ENCODE measurements at regions of chr13 and their contacts with region 1.

Region 1: GRCh38 chr13:98653463-98653985 is 76.6 kb upstream of the STK24 start:
- DNase-seq: peak; percentile 76 to 80
- ATAC-seq: peak; percentile 97 to 98
- H3K4me3 ChIP-seq: no peak overlapping the region
- H3K27ac ChIP-seq: no peak overlapping the region
- H3K4me1 ChIP-seq: 0 out of 3 replicates have a peak, but pooled peaks cover 3% of the 10 kb centered on the region
- CTCF ChIP-seq: peak; percentile 73
- EP300 ChIP-seq: no peak
- POLR2A ChIP-seq: no peak
- RAD21 ChIP-seq: peak; percentile 76 to 79

Region 2: DNA sequence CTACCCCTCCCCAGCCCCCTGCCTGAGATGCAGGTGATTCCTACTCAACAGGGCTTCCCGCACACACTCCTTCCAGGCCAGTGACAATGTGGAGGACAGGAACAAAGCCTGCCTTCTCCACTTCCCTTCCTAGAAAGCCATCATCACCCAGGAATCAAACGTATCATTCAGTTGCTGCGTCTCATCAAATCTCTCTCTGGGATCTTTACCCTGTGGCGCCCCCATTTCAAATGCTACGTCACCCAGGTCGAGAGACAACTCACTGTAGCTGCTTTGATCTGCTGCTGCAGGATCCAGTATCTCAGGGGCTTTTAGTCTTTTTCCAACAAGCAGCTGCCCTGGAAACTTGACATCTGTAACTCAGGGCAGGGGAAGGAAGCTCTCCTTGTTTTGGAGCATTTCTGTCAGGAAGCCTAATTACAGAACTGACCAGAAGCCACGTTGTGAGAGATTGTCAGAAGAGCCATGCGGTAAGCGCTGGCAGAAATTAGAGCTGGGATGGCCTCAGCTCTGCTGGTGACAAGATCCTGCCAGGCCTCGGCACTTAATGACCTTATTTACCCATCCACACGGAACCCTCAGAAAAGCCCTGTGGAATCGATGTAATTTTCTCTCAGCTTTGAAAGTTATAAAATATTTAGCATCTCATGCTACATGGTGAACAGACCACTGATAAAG is 217.2 kb before region 1 on chr13:
- CTCF ChIA-PET with region 1: interaction called, 11 read pairs
- POLR2A ChIA-PET with region 1: no interaction called
- DNase-seq: no peak
- ATAC-seq: no peak
- H3K4me3 ChIP-seq: no peak overlapping the region
- H3K27ac ChIP-seq: no peak overlapping the region
- H3K4me1 ChIP-seq: no peaks in the 10 kb centered on the region
- CTCF ChIP-seq: no peak
- EP300 ChIP-seq: no peak
- POLR2A ChIP-seq: no peak
- RAD21 ChIP-seq: no peak

Region 3: DNA sequence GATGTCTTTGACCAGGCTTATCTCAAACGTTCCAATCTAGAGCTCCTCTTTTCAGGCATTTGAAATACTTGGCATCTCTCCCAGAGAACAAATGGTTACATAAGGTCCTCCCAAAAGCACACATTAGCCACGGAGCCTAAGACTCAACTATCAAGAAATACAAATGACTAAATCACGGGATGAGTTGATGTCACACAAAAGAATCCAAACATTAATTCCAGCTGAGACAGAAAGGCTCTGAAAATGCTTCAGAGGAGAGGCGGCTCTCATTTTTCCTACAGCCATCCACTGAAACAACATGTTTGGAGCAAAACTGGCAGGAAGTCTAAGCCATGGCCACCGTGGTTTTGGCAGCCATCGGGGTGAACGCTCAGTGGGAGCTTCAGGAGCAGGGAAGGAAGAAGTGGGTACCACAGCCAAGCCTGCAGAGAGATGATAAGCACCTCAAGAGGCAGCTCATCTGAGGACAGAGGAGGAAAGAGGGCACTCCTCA is 199.1 kb before region 1 on chr13:
- CTCF ChIA-PET with region 1: interaction called, 12 read pairs
- POLR2A ChIA-PET with region 1: interaction called, 3 read pairs
- DNase-seq: peak in 1 of 2 experiments; percentile 19
- ATAC-seq: peak in 1 of 2 experiments; percentile 38; a peak in 3 of 6 replicates
- H3K4me3 ChIP-seq: no peak overlapping the region
- H3K27ac ChIP-seq: peak overlapping the region; percentile 41 to 46; a peak in 1 of 6 replicates
- H3K4me1 ChIP-seq: peaks cover 11% of the 10 kb centered on the region; the same call in 2 of the 3 replicates
- CTCF ChIP-seq: no peak
- EP300 ChIP-seq: no peak
- POLR2A ChIP-seq: no peak
- RAD21 ChIP-seq: no peak

Region 4: GRCh38 chr13:98484289-98485219 is 169.0 kb before region 1 on chr13:
- CTCF ChIA-PET with region 1: interaction called, 42 read pairs
- POLR2A ChIA-PET with region 1: interaction called, 4 read pairs
- DNase-seq: peak; percentile 91 to 96
- ATAC-seq: peak; percentile 93 to 98
- H3K4me3 ChIP-seq: peak overlapping the region; percentile 26; the same call in 2 of the 3 replicates
- H3K27ac ChIP-seq: peak overlapping the region; percentile 93 to 98
- H3K4me1 ChIP-seq: peaks cover 71% of the 10 kb centered on the region
- CTCF ChIP-seq: no peak
- EP300 ChIP-seq: peak; percentile 69 to 87; a peak in 3 of 5 replicates
- POLR2A ChIP-seq: no peak
- RAD21 ChIP-seq: peak; percentile 26 to 45

Region 5: GRCh38 chr13:98632961-98633360 is 20.6 kb before region 1 on chr13:
- CTCF ChIA-PET with region 1: interaction called, 19 read pairs
- POLR2A ChIA-PET with region 1: no interaction called
- DNase-seq: no peak
- ATAC-seq: no peak
- H3K4me3 ChIP-seq: no peak overlapping the region
- H3K27ac ChIP-seq: no peak overlapping the region
- H3K4me1 ChIP-seq: no peaks in the 10 kb centered on the region
- CTCF ChIP-seq: no peak
- EP300 ChIP-seq: no peak
- POLR2A ChIP-seq: no peak
- RAD21 ChIP-seq: no peak

Region 6: GRCh38 chr13:98672944-98673545 is 19.5 kb after region 1 on chr13:
- CTCF ChIA-PET with region 1: interaction called, 11 read pairs
- POLR2A ChIA-PET with region 1: no interaction called
- DNase-seq: peak; percentile 70 to 75
- ATAC-seq: peak; percentile 89 to 93
- H3K4me3 ChIP-seq: no peak overlapping the region
- H3K27ac ChIP-seq: peak overlapping the region; percentile 37 to 75; a peak in 4 of 6 replicates
- H3K4me1 ChIP-seq: peaks cover 4% of the 10 kb centered on the region; the same call in 2 of the 3 replicates
- CTCF ChIP-seq: peak; percentile 91
- EP300 ChIP-seq: no peak
- POLR2A ChIP-seq: no peak
- RAD21 ChIP-seq: peak; percentile 75 to 85

Measured in A549 (cell line).